Activated CD4-positive, alpha-beta T cell treated with anti-CD3 and anti-CD28 coated beads for 36 hours (primary cell): ENCODE measurements at regions of chr13 and their contacts with region 1.

Region 1: DNA sequence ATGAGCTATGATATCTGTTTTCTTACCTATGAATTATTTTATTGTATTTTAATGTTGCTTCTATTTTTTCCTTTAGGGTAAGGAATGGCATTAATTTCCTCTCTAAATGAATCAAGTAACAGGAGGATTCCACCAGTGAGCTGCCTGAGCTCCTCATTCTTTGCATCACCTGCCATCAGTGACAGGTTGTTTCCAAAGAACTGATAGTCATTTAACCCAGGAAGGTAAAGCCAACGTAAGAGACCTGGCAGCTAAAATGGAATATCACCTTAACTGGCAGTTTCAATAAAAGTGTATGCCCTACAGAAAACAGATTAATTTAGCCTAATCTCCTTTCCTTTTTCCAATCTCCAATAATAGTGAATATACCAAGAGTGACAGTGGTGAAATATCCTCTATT is 812.0 kb downstream of the SLITRK5 start:
- DNase-seq: no peak
- ATAC-seq: no peak
- H3K4me3 Mint-ChIP-seq: no peak overlapping the region
- H3K27ac Mint-ChIP-seq: no peak overlapping the region
- H3K4me1 Mint-ChIP-seq: no peaks in the 10 kb centered on the region
- H3K27me3 Mint-ChIP-seq: no peaks in the 10 kb centered on the region

Region 2: GRCh38 chr13:88617176-88617575 is 134.0 kb after region 1 on chr13:
- CTCF ChIA-PET with region 1: no interaction called
- POLR2A ChIA-PET with region 1: no interaction called
- intact Hi-C with region 1: no loop called
- DNase-seq: no peak
- ATAC-seq: no peak
- H3K4me3 Mint-ChIP-seq: no peak overlapping the region
- H3K27ac Mint-ChIP-seq: no peak overlapping the region
- H3K4me1 Mint-ChIP-seq: peaks cover 10% of the 10 kb centered on the region
- H3K27me3 Mint-ChIP-seq: no peaks in the 10 kb centered on the region

Region 3: GRCh38 chr13:88932950-88933349 is 449.7 kb after region 1 on chr13:
- CTCF ChIA-PET with region 1: no interaction called
- POLR2A ChIA-PET with region 1: interaction called, 10 read pairs
- intact Hi-C with region 1: no loop called
- DNase-seq: no peak
- ATAC-seq: no peak
- H3K4me3 Mint-ChIP-seq: no peak overlapping the region
- H3K27ac Mint-ChIP-seq: no peak overlapping the region
- H3K4me1 Mint-ChIP-seq: peaks cover 12% of the 10 kb centered on the region
- H3K27me3 Mint-ChIP-seq: no peaks in the 10 kb centered on the region